T-cell (primary cell): ENCODE measurements at regions of chr10 and their contacts with region 1.

Region 1: DNA sequence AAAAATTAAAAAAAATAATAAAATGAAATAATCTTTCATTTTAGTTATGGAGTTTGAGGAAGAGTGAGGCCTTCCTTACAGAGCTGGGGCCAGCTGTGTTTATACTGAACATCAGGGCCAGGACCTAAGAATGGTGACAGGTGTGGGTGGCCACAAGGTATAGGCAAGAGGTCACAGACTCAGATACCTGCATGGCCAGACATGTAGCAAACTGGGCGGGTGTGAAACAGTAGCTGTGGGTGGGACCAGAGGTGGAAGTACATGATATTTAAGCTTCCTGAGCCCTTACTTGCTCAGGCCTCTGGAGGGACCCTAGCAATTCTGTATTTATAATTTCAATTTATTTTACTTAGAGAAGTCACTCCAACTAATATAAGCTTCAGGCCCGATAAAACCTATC is 27.7 kb upstream of the CAMK1D start:
- DNase-seq: no peak
- ATAC-seq: no peak
- H3K4me3 ChIP-seq: no peak overlapping the region
- H3K4me3 Mint-ChIP-seq: no peak overlapping the region
- H3K27ac ChIP-seq: no peak overlapping the region
- H3K27ac Mint-ChIP-seq: no peak overlapping the region
- H3K4me1 ChIP-seq: no peaks in the 10 kb centered on the region
- H3K4me1 Mint-ChIP-seq: peaks cover 6 to 12% (median 8%) of the 10 kb centered on the region in 3 donors
- H3K27me3 ChIP-seq: no peaks in the 10 kb centered on the region
- H3K27me3 Mint-ChIP-seq: no peaks in the 10 kb centered on the region

Region 2: DNA sequence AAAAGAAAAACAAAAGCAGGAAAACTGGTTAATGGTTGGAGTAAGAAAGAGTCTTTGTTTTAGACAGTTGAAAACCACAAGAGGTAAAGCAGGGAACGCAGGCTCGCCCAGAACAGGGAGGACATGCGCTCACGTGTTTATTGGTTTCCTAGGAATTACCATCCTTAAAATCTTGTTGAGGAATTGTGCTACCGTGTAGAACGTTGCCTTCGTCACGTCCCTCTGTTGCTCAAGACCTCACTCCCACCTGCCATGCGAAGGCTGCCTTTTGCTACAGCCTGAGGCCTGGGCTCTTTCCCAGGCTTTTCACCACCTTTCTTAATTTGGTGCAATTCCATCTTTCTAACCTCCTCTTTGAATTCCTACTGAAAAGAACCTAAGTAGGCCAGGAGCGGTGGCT is 33.9 kb before region 1 on chr10:
- CTCF ChIA-PET with region 1: no interaction called
- POLR2A ChIA-PET with region 1: no interaction called
- DNase-seq: no peak
- ATAC-seq: no peak
- H3K4me3 ChIP-seq: no peak overlapping the region
- H3K4me3 Mint-ChIP-seq: no peak overlapping the region
- H3K27ac ChIP-seq: no peak overlapping the region
- H3K27ac Mint-ChIP-seq: no peak overlapping the region
- H3K4me1 ChIP-seq: no peaks in the 10 kb centered on the region
- H3K4me1 Mint-ChIP-seq: peaks cover 0 to 3% (median 0%) of the 10 kb centered on the region in 3 donors
- H3K27me3 ChIP-seq: no peaks in the 10 kb centered on the region
- H3K27me3 Mint-ChIP-seq: no peaks in the 10 kb centered on the region

Region 3: GRCh38 chr10:12308057-12308456 is 13.6 kb before region 1 on chr10:
- CTCF ChIA-PET with region 1: interaction called in 1 of 2 experiments, 16 read pairs
- POLR2A ChIA-PET with region 1: no interaction called
- DNase-seq: no peak
- ATAC-seq: no peak
- H3K4me3 ChIP-seq: no peak overlapping the region
- H3K4me3 Mint-ChIP-seq: no peak overlapping the region
- H3K27ac ChIP-seq: no peak overlapping the region
- H3K27ac Mint-ChIP-seq: no peak overlapping the region
- H3K4me1 ChIP-seq: no peaks in the 10 kb centered on the region
- H3K4me1 Mint-ChIP-seq: peaks cover 0 to 3% (median 0%) of the 10 kb centered on the region in 3 donors
- H3K27me3 ChIP-seq: no peaks in the 10 kb centered on the region
- H3K27me3 Mint-ChIP-seq: no peaks in the 10 kb centered on the region

Region 4: DNA sequence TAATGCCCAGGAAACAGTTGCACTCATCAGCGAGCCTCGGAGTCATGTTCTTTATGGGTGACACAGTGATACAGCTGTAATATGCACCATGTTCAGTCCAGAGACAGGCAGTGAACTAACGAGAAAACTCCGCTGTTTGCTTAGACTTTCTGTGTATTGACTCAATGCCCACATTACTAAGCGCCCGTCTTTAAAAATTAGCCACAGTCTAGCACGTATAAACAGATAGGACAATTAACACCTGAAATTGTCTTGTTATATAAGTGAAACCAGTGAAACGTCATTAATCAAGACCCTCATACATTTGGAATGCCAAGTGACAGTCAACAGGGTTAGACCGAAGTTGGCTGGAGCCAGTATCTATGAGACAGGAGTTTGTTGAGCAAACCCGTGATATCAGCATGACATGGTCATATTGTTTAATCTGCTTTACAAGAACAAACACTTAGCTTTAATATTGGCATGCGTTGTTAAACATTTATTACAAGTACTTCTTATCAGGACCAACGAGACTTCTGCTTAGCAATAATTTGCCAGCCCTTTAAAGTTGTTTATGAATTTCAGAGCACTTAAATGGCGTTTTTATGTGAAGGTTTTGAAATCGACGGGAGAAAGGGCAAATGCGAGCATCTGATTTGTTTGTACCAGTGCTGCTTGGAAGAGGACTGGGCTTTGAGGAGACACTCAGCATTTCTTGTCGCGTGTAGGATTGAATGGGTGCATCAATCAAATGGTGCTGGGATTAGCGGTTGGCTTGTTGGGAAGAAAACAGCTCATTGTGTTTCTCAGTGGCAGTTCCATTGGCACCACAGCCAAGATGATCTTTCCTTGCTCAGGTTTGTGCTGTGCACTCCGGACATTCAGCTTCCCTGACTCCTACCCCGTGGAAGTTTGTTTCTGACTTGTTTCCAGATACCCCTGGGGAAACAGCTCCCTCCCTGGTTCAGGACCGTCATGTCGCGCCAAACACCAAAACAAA is 84.0 kb after region 1 on chr10:
- CTCF ChIA-PET with region 1: no interaction called
- POLR2A ChIA-PET with region 1: no interaction called
- DNase-seq: no peak
- ATAC-seq: no peak
- H3K4me3 ChIP-seq: no peak overlapping the region
- H3K4me3 Mint-ChIP-seq: no peak overlapping the region
- H3K27ac ChIP-seq: no peak overlapping the region
- H3K27ac Mint-ChIP-seq: no peak overlapping the region
- H3K4me1 ChIP-seq: no peaks in the 10 kb centered on the region
- H3K4me1 Mint-ChIP-seq: peaks cover 24 to 31% (median 29%) of the 10 kb centered on the region in 3 donors
- H3K27me3 ChIP-seq: no peaks in the 10 kb centered on the region
- H3K27me3 Mint-ChIP-seq: no peaks in the 10 kb centered on the region